Psoas muscle (tissue), 8 donors: ENCODE measurements at regions of chr10 and their contacts with region 1.

Region 1: GRCh38 chr10:98528166-98528804 is 81.5 kb upstream of the HPS1 start:
- DNase-seq: no peak
- ATAC-seq: no peak
- H3K4me3 ChIP-seq: no peak overlapping the region
- H3K27ac ChIP-seq: no peak overlapping the region
- H3K4me1 ChIP-seq: no peaks in the 10 kb centered on the region
- H3K27me3 ChIP-seq: no peaks in the 10 kb centered on the region
- CTCF ChIP-seq: no peak

Region 2: DNA sequence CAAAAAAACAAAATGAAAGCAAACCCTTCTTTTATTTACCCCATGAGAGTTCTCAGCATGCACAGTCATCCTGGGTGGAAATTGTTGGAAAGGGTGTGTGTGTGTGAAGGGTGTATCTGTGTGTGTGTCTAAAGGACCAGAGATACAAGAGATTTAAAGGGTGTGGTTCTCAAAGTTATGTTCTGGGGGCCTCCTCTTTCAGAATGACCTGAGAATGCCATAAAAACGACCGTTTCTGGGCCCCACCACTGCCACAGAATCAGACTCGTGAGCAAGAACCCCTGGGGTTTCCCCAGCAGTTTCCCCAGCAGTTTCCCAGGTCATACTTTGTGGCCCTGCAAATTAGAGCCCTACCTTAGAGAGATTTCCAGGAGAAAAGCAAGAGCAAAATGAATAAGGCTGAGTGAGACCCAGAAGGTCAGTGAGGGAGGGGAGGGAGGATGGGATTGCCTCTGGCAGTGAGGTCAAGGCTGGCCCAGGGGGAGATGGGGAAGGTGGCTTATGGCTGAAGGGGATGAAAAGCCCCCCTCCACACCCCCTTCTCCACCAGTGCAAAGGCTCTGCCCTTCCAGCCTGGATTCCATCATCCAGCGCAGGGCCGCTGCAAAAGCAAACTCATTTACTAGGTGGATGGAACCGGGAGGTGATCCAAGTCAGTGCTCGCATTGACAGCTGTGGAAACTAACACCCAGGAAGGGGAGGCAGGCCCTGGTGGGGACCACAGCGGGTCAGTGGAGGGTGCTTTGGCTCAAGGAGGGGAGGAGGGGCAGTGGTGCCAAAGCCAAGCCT is 123.5 kb before region 1 on chr10:
- intact Hi-C with region 1: no loop called
- DNase-seq: no peak
- ATAC-seq: no peak
- H3K4me3 ChIP-seq: no peak overlapping the region
- H3K27ac ChIP-seq: no peak overlapping the region
- H3K4me1 ChIP-seq: peaks cover 7% of the 10 kb centered on the region
- H3K27me3 ChIP-seq: no peaks in the 10 kb centered on the region
- CTCF ChIP-seq: no peak

Region 3: DNA sequence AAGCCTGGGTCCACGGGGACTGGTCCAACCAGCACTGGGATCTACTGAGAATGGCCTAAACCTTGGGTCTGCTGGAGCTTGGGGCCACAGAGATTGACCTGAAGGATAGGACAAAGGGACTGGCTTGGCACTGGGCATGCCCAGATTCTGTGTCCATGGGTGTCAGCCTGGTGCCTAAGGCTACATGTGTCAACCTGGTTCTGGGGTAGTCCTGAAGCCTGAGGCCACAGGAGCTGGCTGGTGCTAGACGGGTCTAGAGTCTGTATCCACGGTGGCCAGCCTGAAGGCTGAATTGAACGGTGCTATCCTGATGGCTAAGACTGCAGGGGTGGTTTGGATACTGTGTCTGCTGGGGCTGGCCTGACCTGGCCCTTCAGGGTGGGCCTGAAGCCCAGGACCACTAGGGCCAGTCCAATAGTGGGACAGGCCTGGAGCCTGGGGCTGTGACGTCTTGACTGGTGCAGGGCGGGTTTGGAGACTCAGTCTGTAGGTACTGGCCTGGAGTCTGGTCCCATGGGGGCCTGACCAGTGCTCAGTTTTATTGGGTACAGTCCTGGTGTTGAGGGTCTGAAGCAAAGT is 70.8 kb after region 1 on chr10:
- intact Hi-C with region 1: loop called in 1 of 2 experiments (anchors 10 kb)
- DNase-seq: no peak
- ATAC-seq: no peak
- H3K4me3 ChIP-seq: no peak overlapping the region
- H3K27ac ChIP-seq: no peak overlapping the region
- H3K4me1 ChIP-seq: no peaks in the 10 kb centered on the region
- H3K27me3 ChIP-seq: no peaks in the 10 kb centered on the region
- CTCF ChIP-seq: no peak